Colonic mucosa (tissue), 4 donors: ENCODE measurements at regions of chr5 and their contacts with region 1.

Region 1: DNA sequence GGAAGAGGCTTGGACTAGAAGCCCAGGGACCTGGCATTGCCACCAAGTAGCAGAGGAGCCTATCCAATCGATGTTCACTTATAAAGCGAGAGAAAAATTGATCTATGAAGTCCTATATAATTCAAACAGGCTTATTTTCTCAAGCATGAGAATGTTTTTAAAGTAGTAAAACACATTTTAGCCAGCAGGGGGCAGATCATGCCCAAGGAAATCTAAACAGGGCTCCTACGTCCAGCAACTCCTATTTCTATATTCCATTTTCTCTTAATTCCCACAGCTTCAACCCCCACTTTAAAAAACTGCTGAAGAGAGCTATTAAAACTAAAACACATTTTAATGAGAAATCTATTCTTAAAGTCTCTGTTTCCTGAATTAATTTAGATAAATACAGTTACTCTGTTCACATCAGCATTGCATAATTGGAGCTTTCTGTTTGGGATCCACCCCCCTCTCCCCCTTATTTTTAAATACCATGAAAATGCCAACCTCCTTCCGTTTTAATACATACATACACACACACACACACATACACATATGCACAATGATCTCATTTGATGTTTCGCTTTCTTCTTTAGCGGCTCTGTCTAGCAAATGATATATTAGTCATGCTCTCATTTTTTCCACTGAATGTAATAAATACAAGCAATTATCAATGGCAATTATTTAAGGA is 144.9 kb downstream of the MYO10 start:
- DNase-seq: peak; percentile 57
- H3K4me3 ChIP-seq: no peak overlapping the region
- H3K27ac ChIP-seq: no peak overlapping the region
- H3K4me1 ChIP-seq: no peaks in the 10 kb centered on the region
- H3K27me3 ChIP-seq: no peaks in the 10 kb centered on the region
- CTCF ChIP-seq: peak; percentile 58

Region 2: GRCh38 chr5:17056056-17056690 is 265.0 kb after region 1 on chr5:
- intact Hi-C with region 1: no loop called
- DNase-seq: peak; percentile 39
- H3K4me3 ChIP-seq: no peak overlapping the region
- H3K27ac ChIP-seq: no peak overlapping the region
- H3K4me1 ChIP-seq: no peaks in the 10 kb centered on the region
- H3K27me3 ChIP-seq: no peaks in the 10 kb centered on the region
- CTCF ChIP-seq: no peak

Region 3: GRCh38 chr5:17189381-17190036 is 398.3 kb after region 1 on chr5:
- intact Hi-C with region 1: loop called (anchors 2 kb)
- DNase-seq: peak; percentile 90
- H3K4me3 ChIP-seq: no peak overlapping the region
- H3K27ac ChIP-seq: no peak overlapping the region
- H3K4me1 ChIP-seq: no peaks in the 10 kb centered on the region
- H3K27me3 ChIP-seq: no peaks in the 10 kb centered on the region
- CTCF ChIP-seq: peak; percentile 88